HAP-1 (cell line): ENCODE measurements at regions of chr10 and their contacts with region 1.

Region 1: DNA sequence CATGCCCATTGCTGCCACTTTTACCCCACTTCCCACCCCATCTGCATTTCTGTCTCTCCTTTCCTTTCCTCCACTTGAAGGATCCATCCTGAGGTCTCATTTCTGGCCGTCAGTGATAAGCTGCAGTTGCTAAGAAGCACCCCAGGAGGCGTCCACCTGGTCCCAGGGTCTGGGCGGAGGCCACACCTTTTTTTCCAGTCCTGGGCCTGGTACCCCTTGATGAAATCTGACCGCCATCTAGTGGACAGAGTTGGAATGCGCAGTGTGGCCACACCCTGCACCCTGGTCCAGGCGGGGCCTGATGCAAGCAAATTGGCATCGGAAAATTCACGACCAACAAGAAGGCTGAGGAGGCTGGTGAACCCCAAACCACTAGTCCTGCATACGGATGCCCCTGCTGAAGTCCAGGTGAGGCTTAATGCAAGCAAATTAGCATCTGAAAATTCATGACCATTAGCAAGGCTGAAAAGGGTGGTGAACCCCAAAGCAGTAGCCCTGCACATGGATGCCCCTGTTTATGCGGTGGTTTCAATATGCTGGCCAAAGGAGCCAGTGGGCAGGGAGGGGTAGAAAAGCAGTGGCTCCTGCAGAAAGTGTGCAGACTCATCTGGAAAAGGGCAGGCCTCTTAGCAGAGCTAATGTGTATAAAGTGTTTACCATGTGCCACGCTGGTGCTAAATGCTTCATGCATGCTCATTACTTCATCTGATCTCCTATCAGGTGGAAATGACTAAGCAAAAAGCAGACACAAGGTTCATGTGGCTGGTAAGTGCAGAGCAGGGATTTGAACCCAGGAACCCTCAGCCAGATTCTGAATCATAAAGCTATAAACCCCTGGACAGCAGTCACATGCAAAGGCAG is 43.2 kb downstream of the GPAM start:
- DNase-seq: peak; percentile 75 to 93
- H3K4me3 ChIP-seq: no peak overlapping the region
- H3K4me1 ChIP-seq: no peaks in the 10 kb centered on the region
- H3K27me3 ChIP-seq: no peaks in the 10 kb centered on the region

Region 2: DNA sequence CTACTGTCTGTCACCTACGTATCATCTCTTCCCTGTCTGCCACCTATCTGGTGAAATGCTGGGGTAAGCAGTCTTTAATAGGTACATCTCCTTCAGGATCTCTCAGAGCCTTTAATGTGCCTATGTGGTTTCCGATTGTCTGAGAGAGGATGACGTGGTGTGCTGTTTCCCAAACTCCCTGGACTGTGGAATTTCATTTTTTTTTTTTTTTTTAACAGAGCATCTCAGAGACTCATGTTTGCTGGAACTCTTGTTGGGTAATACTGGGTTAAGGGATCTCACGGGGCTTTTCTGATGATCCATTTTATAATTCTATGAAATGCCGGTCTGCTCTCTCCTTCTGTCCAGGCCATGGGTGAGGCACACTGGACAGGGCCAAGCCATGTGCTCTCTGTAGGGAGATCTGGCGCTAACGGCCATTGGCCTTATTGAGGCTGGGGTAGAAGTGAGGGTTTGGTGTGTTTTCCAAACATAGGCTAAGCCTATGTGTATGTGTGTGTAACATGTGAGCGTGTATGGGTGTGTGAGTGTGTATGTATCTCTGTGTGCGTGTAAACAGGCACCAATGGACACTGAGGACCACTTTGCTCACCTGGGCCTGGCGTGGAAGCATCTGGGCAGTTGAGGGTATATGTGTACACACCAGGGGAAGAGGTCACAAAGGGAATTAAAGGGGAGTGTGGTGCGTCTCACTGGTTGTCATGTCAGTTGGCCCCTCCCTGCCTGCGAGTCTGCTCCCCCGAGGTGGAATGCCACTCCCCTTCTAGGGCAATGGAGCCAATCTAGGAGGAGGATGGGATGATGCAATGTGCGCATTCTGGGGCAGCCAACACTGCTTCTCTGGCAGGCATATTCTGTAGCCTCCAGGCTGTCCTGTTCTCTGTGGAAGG is 1055.7 kb before region 1 on chr10:
- in situ Hi-C with region 1: loop called (anchors 10 kb)
- DNase-seq: no peak
- H3K4me3 ChIP-seq: no peak overlapping the region
- H3K4me1 ChIP-seq: no peaks in the 10 kb centered on the region
- H3K27me3 ChIP-seq: no peaks in the 10 kb centered on the region

Region 3: GRCh38 chr10:111504376-111504775 is 636.0 kb before region 1 on chr10:
- in situ Hi-C with region 1: no loop called
- DNase-seq: no peak
- H3K4me3 ChIP-seq: no peak overlapping the region
- H3K4me1 ChIP-seq: no peaks in the 10 kb centered on the region
- H3K27me3 ChIP-seq: no peaks in the 10 kb centered on the region

Region 4: DNA sequence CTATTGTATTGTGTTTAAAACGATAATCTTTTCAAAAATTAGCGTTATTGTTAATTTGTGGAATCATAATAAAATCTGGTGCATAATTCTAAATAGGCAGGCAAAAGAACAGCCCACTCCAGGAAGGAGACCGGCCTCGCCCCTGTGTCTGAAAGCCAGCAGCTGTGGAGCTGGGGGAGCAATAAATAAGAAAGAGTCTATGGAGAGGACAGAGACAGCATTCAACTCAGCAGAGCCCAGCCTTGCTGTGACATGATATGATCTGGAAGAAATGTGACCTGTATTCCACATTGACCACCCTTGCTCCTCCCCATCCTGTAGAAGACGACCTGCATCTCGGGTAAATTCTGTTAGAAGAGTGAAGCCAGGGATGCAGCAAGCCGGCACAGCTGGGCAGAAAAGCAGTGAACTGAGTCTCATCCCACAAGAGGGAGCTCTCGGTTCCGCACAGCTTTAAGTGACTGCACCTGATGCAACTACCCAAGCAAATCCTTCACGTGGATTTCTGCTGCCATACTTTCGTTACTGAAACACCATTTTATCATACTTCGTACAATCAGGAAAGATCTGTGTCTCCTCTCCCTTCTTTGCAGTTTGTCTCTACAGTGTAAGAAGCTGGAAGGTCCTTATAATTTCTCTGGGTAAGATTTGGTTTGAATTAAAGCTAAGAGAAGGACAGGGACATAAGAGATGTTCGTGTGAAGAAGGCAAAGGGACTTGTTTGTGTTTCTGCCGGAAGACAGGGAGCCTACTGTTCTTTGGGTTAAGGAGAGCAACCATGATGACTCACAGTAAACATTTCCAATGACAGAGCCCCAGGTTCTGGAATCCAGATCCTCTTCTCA is 383.9 kb before region 1 on chr10:
- in situ Hi-C with region 1: loop called (anchors 5 kb)
- DNase-seq: peak; percentile 44 to 69
- H3K4me3 ChIP-seq: no peak overlapping the region
- H3K4me1 ChIP-seq: no peaks in the 10 kb centered on the region
- H3K27me3 ChIP-seq: no peaks in the 10 kb centered on the region

Region 5: DNA sequence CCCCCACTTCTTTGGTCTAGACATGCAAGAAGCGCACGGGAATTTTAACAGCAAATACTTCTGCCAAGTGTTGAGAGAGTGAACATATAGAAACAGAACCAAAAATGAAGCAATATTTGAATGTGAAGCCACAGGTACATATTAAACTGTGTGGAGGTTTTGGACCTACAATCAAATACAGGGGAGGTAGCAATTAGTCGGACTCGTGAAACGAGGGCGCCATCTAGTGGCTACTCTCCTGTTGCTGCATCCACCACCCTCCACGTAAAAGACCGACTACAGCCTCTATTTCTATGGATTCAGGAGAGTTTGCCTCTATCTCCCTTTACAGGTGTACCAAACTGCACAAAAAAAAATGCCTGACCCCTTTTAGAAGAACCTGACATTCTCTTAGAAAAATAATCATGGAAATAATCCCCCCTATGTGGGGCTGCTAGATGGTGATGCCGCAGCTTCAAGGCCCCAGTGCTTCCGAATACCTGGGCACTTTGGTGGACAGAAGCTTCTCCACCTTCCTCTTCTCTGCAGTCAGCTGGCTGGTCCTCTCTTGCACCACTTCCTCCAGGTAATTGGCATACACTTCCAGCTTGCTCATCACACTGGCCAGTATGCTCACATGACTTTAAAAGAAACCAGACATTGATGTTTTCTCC is 174.6 kb after region 1 on chr10:
- in situ Hi-C with region 1: loop called (anchors 10 kb)
- DNase-seq: peak; percentile 41 to 85
- H3K4me3 ChIP-seq: no peak overlapping the region
- H3K4me1 ChIP-seq: no peaks in the 10 kb centered on the region
- H3K27me3 ChIP-seq: peaks cover 31% of the 10 kb centered on the region

Region 6: DNA sequence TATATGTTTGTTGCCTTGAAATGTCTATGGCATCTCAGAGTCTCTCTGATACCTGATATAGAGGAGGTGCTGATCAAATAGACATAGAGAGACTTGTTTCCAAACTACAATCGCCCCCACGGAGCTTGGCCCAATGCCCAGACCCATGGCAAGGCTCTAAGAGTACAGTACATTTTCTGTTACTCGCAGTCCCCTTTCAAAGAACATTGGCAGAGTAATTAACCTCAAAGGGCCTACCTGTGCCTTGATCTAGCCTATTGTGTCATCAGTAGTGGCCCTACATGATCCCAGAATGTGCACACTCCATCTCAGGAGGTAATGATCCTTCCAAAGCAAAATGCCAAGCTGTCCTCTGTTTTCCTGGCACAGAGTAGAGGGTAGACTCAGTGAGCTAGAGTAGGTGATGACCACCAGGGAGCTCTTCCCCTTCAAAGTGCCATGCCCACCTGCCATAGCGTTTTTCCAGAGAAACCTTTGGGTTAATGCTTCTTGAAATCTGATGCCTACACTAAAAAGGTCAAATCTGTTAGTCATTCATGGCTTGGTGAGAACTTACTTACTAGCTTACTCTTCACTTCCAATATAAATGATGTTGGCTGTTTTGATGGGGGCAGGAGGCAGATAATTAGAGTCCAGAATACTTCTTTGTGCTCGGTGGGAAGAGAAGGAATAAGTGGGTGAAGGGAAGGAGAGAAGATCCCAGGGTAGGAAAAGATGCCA is 192.3 kb after region 1 on chr10:
- in situ Hi-C with region 1: no loop called
- DNase-seq: no peak
- H3K4me3 ChIP-seq: no peak overlapping the region
- H3K4me1 ChIP-seq: no peaks in the 10 kb centered on the region
- H3K27me3 ChIP-seq: no peaks in the 10 kb centered on the region

Region 7: GRCh38 chr10:112409755-112410154 is 269.4 kb after region 1 on chr10:
- in situ Hi-C with region 1: no loop called
- DNase-seq: no peak
- H3K4me3 ChIP-seq: no peak overlapping the region
- H3K4me1 ChIP-seq: no peaks in the 10 kb centered on the region
- H3K27me3 ChIP-seq: peaks cover 8% of the 10 kb centered on the region; the same call in 1 of the 2 replicates